A549 (cell line): ENCODE measurements at regions of chr3 and their contacts with region 1.

Region 1: DNA sequence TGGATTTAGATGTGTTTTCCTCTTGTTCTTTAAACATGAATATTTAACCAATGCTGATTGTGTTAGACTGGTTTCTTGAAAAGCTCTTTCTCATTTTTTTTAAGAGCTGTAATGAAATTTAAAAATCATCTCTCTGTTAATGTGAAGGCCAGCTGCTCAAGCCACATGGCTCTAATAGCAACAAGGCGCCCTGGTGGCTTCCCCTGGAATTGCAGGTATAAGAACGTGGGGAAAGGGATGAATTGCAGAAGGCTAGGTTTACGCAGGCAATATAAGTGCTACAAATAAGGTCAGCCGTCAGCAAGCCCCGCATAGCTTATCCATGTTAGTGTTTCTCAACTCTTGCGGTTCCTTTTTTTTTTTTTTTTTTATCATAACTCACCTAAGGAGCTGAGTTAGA is 108.5 kb downstream of the SAMMSON start:
- DNase-seq: peak in 1 of 2 experiments; percentile 29
- ATAC-seq: peak in 1 of 2 experiments; percentile 51; a peak in 2 of 6 replicates
- H3K4me3 ChIP-seq: no peak overlapping the region
- H3K27ac ChIP-seq: no peak overlapping the region
- H3K4me1 ChIP-seq: no peaks in the 10 kb centered on the region
- CTCF ChIP-seq: no peak
- EP300 ChIP-seq: no peak
- POLR2A ChIP-seq: no peak
- RAD21 ChIP-seq: no peak

Region 2: DNA sequence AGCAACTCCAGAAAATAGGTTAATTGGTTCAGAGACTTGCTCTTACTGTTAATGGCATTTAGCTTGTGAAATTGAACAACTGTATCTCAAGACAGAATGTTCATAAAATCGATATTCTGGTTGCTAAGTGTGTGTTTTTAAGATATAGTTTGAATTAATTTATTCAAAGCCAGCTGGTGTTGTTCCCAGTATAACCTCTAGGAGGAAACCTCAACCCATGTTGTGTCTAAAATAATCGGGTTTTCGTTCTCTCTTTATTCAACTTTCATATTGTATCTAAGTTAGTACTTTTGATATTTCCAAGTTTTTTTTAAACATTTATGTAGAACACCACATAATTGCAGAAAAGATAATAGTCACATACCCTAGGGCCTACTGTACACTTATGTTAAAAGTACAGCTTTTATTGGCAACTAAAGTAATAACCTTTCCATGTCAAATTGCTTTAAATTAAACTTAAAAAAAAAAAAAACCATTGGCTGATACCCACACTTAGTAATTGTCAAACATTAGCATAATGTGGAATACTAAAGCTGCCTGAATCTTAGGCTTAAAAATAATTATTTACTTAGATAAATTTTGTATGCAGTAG is 17.7 kb before region 1 on chr3:
- CTCF ChIA-PET with region 1: interaction called, 18 read pairs
- POLR2A ChIA-PET with region 1: no interaction called
- DNase-seq: peak; percentile 28 to 31
- ATAC-seq: peak in 1 of 2 experiments; percentile 46; a peak in 1 of 6 replicates
- H3K4me3 ChIP-seq: no peak overlapping the region
- H3K27ac ChIP-seq: no peak overlapping the region
- H3K4me1 ChIP-seq: no peaks in the 10 kb centered on the region
- CTCF ChIP-seq: peak; percentile 79
- EP300 ChIP-seq: no peak
- POLR2A ChIP-seq: no peak
- RAD21 ChIP-seq: peak; percentile 90 to 91

Region 3: GRCh38 chr3:70120357-70121121 is 12.5 kb after region 1 on chr3:
- CTCF ChIA-PET with region 1: interaction called, 10 read pairs
- POLR2A ChIA-PET with region 1: no interaction called
- DNase-seq: peak; percentile 56 to 90
- ATAC-seq: peak; percentile 92 to 99
- H3K4me3 ChIP-seq: no peak overlapping the region
- H3K27ac ChIP-seq: no peak overlapping the region
- H3K4me1 ChIP-seq: no peaks in the 10 kb centered on the region
- CTCF ChIP-seq: peak; percentile 79
- EP300 ChIP-seq: no peak
- POLR2A ChIP-seq: no peak
- RAD21 ChIP-seq: peak; percentile 88 to 96

Region 4: GRCh38 chr3:70358978-70359580 is 251.0 kb after region 1 on chr3:
- CTCF ChIA-PET with region 1: interaction called, 11 read pairs
- POLR2A ChIA-PET with region 1: no interaction called
- DNase-seq: peak; percentile 3 to 54
- ATAC-seq: peak in 1 of 2 experiments; percentile 49; a peak in 1 of 6 replicates
- H3K4me3 ChIP-seq: no peak overlapping the region
- H3K27ac ChIP-seq: no peak overlapping the region
- H3K4me1 ChIP-seq: peaks cover 5% of the 10 kb centered on the region; the same call in 2 of the 3 replicates
- CTCF ChIP-seq: peak; percentile 80
- EP300 ChIP-seq: no peak
- POLR2A ChIP-seq: no peak
- RAD21 ChIP-seq: peak; percentile 80 to 81